ENCODE measurements at regions of chr16 and their contacts with region 1.

Region 1: GRCh38 chr16:31868691-31869167 is 4.9 kb upstream of the ZNF267 start:
- DNase-seq: peak; percentile 78
- H3K4me3 ChIP-seq: no peak overlapping the region
- H3K27ac ChIP-seq: no peak overlapping the region
- H3K4me1 ChIP-seq: peaks cover 5% of the 10 kb centered on the region
- H3K27me3 ChIP-seq: no peaks in the 10 kb centered on the region
- CTCF ChIP-seq: peak; percentile 78

Region 2: GRCh38 chr16:30703971-30704370 is 1164.8 kb before region 1 on chr16:
- CTCF ChIA-PET with region 1: no interaction called
- POLR2A ChIA-PET with region 1: no interaction called
- intact Hi-C with region 1: no loop called
- DNase-seq: no peak
- H3K4me3 ChIP-seq: no peak overlapping the region
- H3K27ac ChIP-seq: no peak overlapping the region
- H3K4me1 ChIP-seq: peaks cover 12% of the 10 kb centered on the region
- H3K27me3 ChIP-seq: no peaks in the 10 kb centered on the region
- CTCF ChIP-seq: no peak

Region 3: DNA sequence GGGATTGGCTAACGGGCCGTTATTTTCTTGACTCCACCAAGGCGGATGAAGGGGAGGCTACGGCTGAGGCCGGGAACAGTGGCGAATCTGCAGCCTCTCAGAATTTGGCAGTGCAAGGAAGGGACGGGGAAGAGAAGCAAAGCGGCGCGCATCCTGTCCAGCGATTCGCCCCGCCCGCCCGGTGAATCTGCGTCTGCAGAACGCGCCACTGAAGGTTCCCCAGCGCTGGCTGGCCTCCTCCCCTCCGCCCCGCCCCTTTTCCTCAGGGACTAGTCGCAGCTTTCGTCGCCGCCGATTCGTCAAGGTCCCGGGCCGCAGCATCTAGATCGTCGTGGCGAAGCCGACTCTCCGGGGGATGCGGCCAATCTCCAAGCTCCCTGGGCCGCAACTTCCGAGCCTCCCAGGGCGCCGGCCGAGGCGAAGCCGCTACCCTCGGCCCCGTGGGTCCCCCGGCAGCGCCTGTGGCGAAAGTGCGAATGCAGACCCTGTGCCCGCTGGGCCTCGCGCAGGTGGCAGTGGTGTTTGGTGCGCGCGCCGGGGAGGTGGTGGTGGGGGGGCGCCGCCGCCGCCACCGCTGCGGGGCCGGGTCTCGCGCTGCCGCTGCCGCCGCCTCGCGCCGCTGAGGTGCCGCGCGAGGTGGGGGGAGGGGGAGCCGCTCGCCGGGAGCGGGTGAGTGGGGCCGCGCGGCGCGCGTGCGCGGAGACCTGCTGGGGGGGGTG is 911.1 kb before region 1 on chr16 and contains the start of gene SETD1A:
- CTCF ChIA-PET with region 1: no interaction called
- POLR2A ChIA-PET with region 1: no interaction called
- intact Hi-C with region 1: loop called (anchors 10 kb)
- DNase-seq: peak; percentile 98
- H3K4me3 ChIP-seq: peak within 1 kb of the TSS; percentile 80
- H3K27ac ChIP-seq: peak within 1 kb of the TSS; percentile 99
- H3K4me1 ChIP-seq: peaks cover 10% of the 10 kb centered on the region
- H3K27me3 ChIP-seq: no peaks in the 10 kb centered on the region
- CTCF ChIP-seq: no peak
- total RNA-seq, gene SETD1A: 31.4 and 37.1 TPM in 2 replicates

Region 4: GRCh38 chr16:31202414-31203375 is 666.0 kb before region 1 on chr16 and contains the start of gene PYCARD:
- CTCF ChIA-PET with region 1: no interaction called
- POLR2A ChIA-PET with region 1: no interaction called
- intact Hi-C with region 1: loop called (anchors 5 kb)
- DNase-seq: no peak
- H3K4me3 ChIP-seq: peak within 1 kb of the TSS; percentile 49
- H3K27ac ChIP-seq: no peak within 1 kb of the TSS
- H3K4me1 ChIP-seq: no peaks in the 10 kb centered on the region
- H3K27me3 ChIP-seq: peaks cover 9% of the 10 kb centered on the region
- CTCF ChIP-seq: no peak
- total RNA-seq, gene PYCARD: 1.8 and 2.0 TPM in 2 replicates

Region 5: DNA sequence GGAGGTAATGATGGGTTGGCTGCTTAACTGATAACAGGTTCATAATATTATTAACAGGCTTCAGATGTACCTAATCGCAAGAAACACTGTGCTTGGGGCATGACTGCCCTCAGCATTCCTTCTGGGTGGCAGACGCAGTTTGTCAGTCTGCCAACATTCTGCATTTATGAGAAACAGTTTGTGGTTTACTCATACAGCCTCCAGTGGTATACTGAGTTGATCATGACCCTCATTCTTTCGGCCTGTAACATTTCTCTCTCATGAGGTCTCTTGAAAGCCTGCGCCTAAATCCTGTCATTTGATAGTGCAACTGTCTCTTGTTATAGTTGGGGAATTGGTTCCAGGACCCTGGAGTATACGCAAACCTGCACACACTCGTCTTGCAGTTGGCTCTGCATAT is 355.6 kb before region 1 on chr16:
- CTCF ChIA-PET with region 1: no interaction called
- POLR2A ChIA-PET with region 1: no interaction called
- intact Hi-C with region 1: loop called (anchors 10 kb)
- DNase-seq: no peak
- H3K4me3 ChIP-seq: no peak overlapping the region
- H3K27ac ChIP-seq: no peak overlapping the region
- H3K4me1 ChIP-seq: peaks cover 3% of the 10 kb centered on the region
- H3K27me3 ChIP-seq: peaks cover 10% of the 10 kb centered on the region
- CTCF ChIP-seq: no peak

Region 6: GRCh38 chr16:31713071-31713944 is 155.4 kb before region 1 on chr16:
- CTCF ChIA-PET with region 1: no interaction called
- POLR2A ChIA-PET with region 1: no interaction called
- intact Hi-C with region 1: loop called (anchors 10 kb)
- DNase-seq: peak; percentile 97
- H3K4me3 ChIP-seq: peak overlapping the region; percentile 94
- H3K27ac ChIP-seq: peak overlapping the region; percentile 95
- H3K4me1 ChIP-seq: no peaks in the 10 kb centered on the region
- H3K27me3 ChIP-seq: no peaks in the 10 kb centered on the region
- CTCF ChIP-seq: no peak

Region 7: DNA sequence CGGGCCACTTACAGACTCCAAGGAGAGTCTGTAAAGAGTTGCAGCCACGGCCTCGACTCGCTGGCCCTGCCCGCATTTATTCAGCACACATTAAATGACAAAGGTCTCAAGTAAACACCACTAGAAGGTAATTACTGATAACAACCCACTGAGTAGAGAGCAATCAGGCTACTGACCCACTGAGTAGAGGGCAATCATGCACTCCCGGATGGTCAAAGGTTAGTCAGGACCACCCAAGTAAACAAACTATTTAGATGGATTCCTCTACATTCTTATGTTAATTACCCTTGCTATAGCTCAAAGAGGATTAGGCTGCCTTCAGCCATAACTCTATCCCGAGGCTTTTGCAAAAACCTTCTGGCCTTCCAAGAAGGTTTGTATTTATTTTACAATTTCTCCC is 25.9 kb before region 1 on chr16:
- CTCF ChIA-PET with region 1: no interaction called
- POLR2A ChIA-PET with region 1: no interaction called
- intact Hi-C with region 1: no loop called
- DNase-seq: no peak
- H3K4me3 ChIP-seq: no peak overlapping the region
- H3K27ac ChIP-seq: no peak overlapping the region
- H3K4me1 ChIP-seq: no peaks in the 10 kb centered on the region
- H3K27me3 ChIP-seq: no peaks in the 10 kb centered on the region
- CTCF ChIP-seq: no peak

Measured in A673 (cell line).